Prostate gland (tissue), 2 donors: ENCODE measurements at regions of chr16 and their contacts with region 1.

Region 1: DNA sequence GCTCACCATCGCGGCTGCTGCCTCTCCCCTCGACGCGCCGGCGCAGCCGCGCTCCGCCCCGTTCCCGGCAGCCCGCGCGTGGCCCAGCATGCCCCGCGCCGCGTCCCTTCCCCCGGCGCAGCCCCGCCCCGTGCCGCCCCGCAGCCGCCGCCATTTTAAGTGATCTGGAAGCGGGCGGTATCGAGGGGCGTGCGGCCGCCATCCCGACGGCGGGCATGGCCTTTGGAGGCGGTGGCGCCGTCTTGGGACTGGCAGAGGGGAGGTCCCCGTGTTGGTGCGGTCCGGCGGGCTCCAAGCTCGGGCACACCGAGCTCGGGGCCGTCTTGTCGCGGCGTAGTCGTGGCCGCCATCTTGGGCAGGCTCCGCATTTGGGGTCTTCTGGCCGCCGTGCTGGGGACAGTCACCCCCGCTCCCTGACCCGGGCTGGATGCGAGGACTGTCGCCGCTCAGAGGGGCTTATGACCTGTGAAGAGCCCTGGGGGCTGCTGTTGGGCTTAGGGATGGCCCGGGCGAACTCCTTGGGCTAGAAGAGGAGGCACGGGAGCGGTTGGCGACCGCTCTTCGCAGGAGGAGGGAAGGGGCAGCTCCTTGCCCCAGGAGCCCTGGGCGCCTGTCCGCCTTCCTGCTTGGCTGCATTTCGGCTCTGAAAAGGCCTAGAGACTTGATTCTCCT is at the start of gene ELOB:
- DNase-seq: peak; percentile 80
- H3K4me3 ChIP-seq: peak within 1 kb of the TSS; percentile 97 to 99
- H3K27ac ChIP-seq: peak within 1 kb of the TSS; percentile 99 to 100
- H3K4me1 ChIP-seq: peaks cover 7% of the 10 kb centered on the region
- H3K27me3 ChIP-seq: no peaks in the 10 kb centered on the region
- CTCF ChIP-seq: peak in 1 of 4 experiments; percentile 15
- POLR2A ChIP-seq: peak; percentile 79
- total RNA-seq, gene ELOB: 318 to 496 TPM

Region 2: GRCh38 chr16:2752035-2752849 is 25.1 kb before region 1 on chr16 and contains the start of gene SRRM2:
- intact Hi-C with region 1: loop called (anchors 1 kb)
- DNase-seq: peak; percentile 90
- H3K4me3 ChIP-seq: peak within 1 kb of the TSS; percentile 75 to 93
- H3K27ac ChIP-seq: peak within 1 kb of the TSS; percentile 97 to 99
- H3K4me1 ChIP-seq: peaks cover 11% of the 10 kb centered on the region
- H3K27me3 ChIP-seq: no peaks in the 10 kb centered on the region
- CTCF ChIP-seq: peak in 2 of 4 experiments; percentile 5 to 22
- POLR2A ChIP-seq: peak; percentile 96
- total RNA-seq, gene SRRM2: 287 to 714 TPM

Region 3: GRCh38 chr16:2867987-2868789 is 90.8 kb after region 1 on chr16:
- intact Hi-C with region 1: loop called (anchors 5 kb)
- DNase-seq: peak; percentile 93
- H3K4me3 ChIP-seq: peak overlapping the region; percentile 46 to 78
- H3K27ac ChIP-seq: peak overlapping the region; percentile 80 to 92
- H3K4me1 ChIP-seq: no peaks in the 10 kb centered on the region
- H3K27me3 ChIP-seq: no peaks in the 10 kb centered on the region
- CTCF ChIP-seq: peak; percentile 95 to 99 (median 98)
- POLR2A ChIP-seq: no peak